ENCODE measurements at regions of chr10 and their contacts with region 1.

Region 1: GRCh38 chr10:103333925-103334520 is 16.9 kb downstream of the PCGF6 start:
- DNase-seq: no peak
- ATAC-seq: 0 out of 3 replicates have a peak, but pooled peaks have one; percentile 38
- H3K4me3 ChIP-seq: no peak overlapping the region
- H3K27ac ChIP-seq: no peak overlapping the region
- H3K4me1 ChIP-seq: no peaks in the 10 kb centered on the region
- H3K27me3 ChIP-seq: no peaks in the 10 kb centered on the region
- CTCF ChIP-seq: peak in 2 of 3 experiments; percentile 43 to 60; a peak in 4 of 6 replicates
- EP300 ChIP-seq: no peak
- POLR2A ChIP-seq: no peak
- RAD21 ChIP-seq: peak; percentile 27; the same call in 1 of the 2 replicates

Region 2: DNA sequence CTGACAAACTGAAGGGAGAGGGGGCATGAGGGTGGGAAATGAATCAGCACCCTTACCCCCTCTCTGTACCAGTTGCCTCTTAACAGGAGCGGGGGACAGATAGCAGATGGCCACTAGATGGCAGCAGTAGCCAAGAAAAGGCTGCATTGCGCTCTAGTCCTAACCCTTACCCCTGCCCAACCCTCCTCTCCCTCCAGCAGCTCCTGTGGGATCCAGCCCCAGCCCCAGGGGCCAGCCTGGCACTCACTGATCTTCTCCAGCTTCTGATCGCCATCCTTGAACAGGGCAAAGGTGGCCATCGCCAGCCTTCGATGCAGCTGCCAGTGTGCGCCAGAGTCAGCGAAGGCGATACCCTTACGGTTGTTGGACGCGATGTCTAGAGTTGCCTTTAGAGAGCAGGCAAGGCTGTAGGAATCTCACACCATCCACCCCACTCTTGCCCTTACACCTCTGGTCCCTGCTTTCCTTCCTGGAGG is 499.0 kb before region 1 on chr10:
- CTCF ChIA-PET with region 1: interaction called, 4 read pairs
- POLR2A ChIA-PET with region 1: no interaction called
- RAD21 ChIA-PET with region 1: interaction called, 5 read pairs
- SMC1A ChIA-PET with region 1: no interaction called
- in situ Hi-C with region 1: no loop called
- intact Hi-C with region 1: loop called (anchors 5 kb)
- DNase-seq: peak; percentile 20
- ATAC-seq: peak; percentile 100
- H3K4me3 ChIP-seq: no peak overlapping the region
- H3K27ac ChIP-seq: no peak overlapping the region
- H3K4me1 ChIP-seq: no peaks in the 10 kb centered on the region
- H3K27me3 ChIP-seq: 0 out of 4 replicates have a peak, but pooled peaks cover 0 to 2% of the 10 kb centered on the region in 2 experiments
- CTCF ChIP-seq: peak; percentile 81 to 94 (median 89)
- EP300 ChIP-seq: no peak
- POLR2A ChIP-seq: no peak
- RAD21 ChIP-seq: peak; percentile 88

Region 3: DNA sequence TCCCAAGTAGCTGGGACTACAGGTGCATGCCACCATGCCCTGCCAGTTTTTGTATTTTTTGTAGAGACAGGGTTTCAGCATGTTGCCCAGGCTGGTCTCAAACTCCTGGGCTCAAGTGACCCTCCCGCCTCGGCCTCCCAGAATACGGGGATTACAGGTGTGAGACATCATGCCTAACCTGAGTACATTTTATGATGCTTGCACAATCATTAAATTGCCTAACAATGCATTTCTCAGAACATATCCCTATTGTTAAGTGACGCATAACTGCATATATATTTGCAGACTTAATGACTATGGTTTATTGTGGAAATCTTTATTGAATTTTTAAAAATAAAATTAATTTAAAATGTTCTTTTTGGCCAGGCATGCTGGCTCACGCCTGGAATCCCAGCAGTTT is 26.4 kb before region 1 on chr10:
- CTCF ChIA-PET with region 1: interaction called, 11 read pairs
- POLR2A ChIA-PET with region 1: no interaction called
- RAD21 ChIA-PET with region 1: no interaction called
- SMC1A ChIA-PET with region 1: no interaction called
- in situ Hi-C with region 1: no loop called
- intact Hi-C with region 1: no loop called
- DNase-seq: no peak
- ATAC-seq: no peak
- H3K4me3 ChIP-seq: no peak overlapping the region
- H3K27ac ChIP-seq: no peak overlapping the region
- H3K4me1 ChIP-seq: no peaks in the 10 kb centered on the region
- H3K27me3 ChIP-seq: no peaks in the 10 kb centered on the region
- CTCF ChIP-seq: no peak
- EP300 ChIP-seq: no peak
- POLR2A ChIP-seq: no peak
- RAD21 ChIP-seq: no peak

Region 4: GRCh38 chr10:103350501-103351260 is 16.7 kb after region 1 on chr10 and contains the start of gene PCGF6:
- CTCF ChIA-PET with region 1: interaction called, 12 read pairs
- POLR2A ChIA-PET with region 1: no interaction called
- RAD21 ChIA-PET with region 1: no interaction called
- SMC1A ChIA-PET with region 1: interaction called, 5 read pairs
- in situ Hi-C with region 1: no loop called
- intact Hi-C with region 1: no loop called
- DNase-seq: no peak
- ATAC-seq: peak; percentile 94
- H3K4me3 ChIP-seq: peak within 1 kb of the TSS; percentile 85
- H3K27ac ChIP-seq: peak within 1 kb of the TSS; percentile 82
- H3K4me1 ChIP-seq: no peaks in the 10 kb centered on the region
- H3K27me3 ChIP-seq: no peaks in the 10 kb centered on the region
- CTCF ChIP-seq: no peak; a peak in 1 of 6 replicates
- EP300 ChIP-seq: no peak
- POLR2A ChIP-seq: peak; percentile 82
- RAD21 ChIP-seq: no peak
- polyA plus RNA-seq, gene PCGF6: 6.5 to 8.2 TPM

Region 5: DNA sequence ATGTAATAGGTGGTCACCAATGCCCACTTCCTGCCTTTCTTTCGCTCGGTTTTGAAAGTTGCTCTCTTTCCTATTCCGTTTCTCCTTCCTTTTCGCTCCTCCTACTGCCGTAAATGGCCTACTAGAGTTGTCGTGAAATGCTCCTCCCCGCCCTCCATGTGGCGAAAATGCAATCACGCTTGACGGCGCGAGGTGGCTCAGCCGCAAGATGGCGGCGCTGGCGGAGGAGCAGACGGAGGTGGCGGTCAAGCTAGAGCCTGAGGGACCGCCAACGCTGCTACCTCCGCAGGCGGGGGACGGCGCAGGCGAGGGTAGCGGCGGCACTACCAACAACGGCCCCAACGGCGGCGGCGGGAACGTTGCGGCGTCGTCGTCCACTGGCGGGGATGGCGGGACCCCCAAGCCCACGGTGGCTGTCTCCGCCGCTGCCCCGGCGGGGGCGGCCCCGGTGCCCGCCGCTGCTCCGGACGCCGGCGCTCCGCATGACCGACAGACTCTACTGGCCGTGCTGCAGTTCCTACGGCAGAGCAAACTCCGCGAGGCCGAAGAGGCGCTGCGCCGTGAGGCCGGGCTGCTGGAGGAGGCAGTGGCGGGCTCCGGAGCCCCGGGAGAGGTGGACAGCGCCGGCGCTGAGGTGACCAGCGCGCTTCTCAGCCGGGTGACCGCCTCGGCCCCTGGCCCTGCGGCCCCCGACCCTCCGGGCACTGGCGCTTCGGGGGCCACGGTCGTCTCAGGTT is 33.9 kb after region 1 on chr10 and contains the start of gene TAF5:
- CTCF ChIA-PET with region 1: interaction called, 5 read pairs
- POLR2A ChIA-PET with region 1: interaction called, 11 read pairs
- RAD21 ChIA-PET with region 1: no interaction called
- SMC1A ChIA-PET with region 1: no interaction called
- in situ Hi-C with region 1: no loop called
- intact Hi-C with region 1: no loop called
- DNase-seq: peak; percentile 95
- ATAC-seq: peak; percentile 82
- H3K4me3 ChIP-seq: peak within 1 kb of the TSS; percentile 75
- H3K27ac ChIP-seq: peak within 1 kb of the TSS; percentile 81
- H3K4me1 ChIP-seq: peaks cover 12% of the 10 kb centered on the region
- H3K27me3 ChIP-seq: no peaks in the 10 kb centered on the region
- CTCF ChIP-seq: no peak
- EP300 ChIP-seq: no peak
- POLR2A ChIP-seq: peak; percentile 86
- RAD21 ChIP-seq: no peak
- polyA plus RNA-seq, gene TAF5: 3.7 to 3.8 TPM

Region 6: GRCh38 chr10:103481974-103482531 is 148.0 kb after region 1 on chr10:
- CTCF ChIA-PET with region 1: interaction called, 14 read pairs
- POLR2A ChIA-PET with region 1: no interaction called
- RAD21 ChIA-PET with region 1: no interaction called
- SMC1A ChIA-PET with region 1: interaction called, 6 read pairs
- in situ Hi-C with region 1: no loop called
- intact Hi-C with region 1: no loop called
- DNase-seq: no peak
- ATAC-seq: peak; percentile 93
- H3K4me3 ChIP-seq: no peak overlapping the region
- H3K27ac ChIP-seq: no peak overlapping the region
- H3K4me1 ChIP-seq: no peaks in the 10 kb centered on the region
- H3K27me3 ChIP-seq: no peaks in the 10 kb centered on the region
- CTCF ChIP-seq: peak; percentile 67 to 82 (median 76)
- EP300 ChIP-seq: no peak
- POLR2A ChIP-seq: no peak
- RAD21 ChIP-seq: peak; percentile 83